ENCODE measurements at regions of chr10 and their contacts with region 1.

Region 1: GRCh38 chr10:4656576-4657182 is 169.3 kb upstream of the AKR1E2 start:
- DNase-seq: peak; percentile 50
- H3K4me3 ChIP-seq: no peak overlapping the region
- H3K27ac ChIP-seq: no peak overlapping the region
- H3K4me1 ChIP-seq: no peaks in the 10 kb centered on the region
- CTCF ChIP-seq: peak; percentile 95

Region 2: GRCh38 chr10:3192856-3193635 is 1463.6 kb before region 1 on chr10:
- CTCF ChIA-PET with region 1: no interaction called
- POLR2A ChIA-PET with region 1: no interaction called
- intact Hi-C with region 1: loop called (anchors 2 kb)
- DNase-seq: peak; percentile 53
- H3K4me3 ChIP-seq: no peak overlapping the region
- H3K27ac ChIP-seq: no peak overlapping the region
- H3K4me1 ChIP-seq: no peaks in the 10 kb centered on the region
- CTCF ChIP-seq: peak; percentile 88

Region 3: DNA sequence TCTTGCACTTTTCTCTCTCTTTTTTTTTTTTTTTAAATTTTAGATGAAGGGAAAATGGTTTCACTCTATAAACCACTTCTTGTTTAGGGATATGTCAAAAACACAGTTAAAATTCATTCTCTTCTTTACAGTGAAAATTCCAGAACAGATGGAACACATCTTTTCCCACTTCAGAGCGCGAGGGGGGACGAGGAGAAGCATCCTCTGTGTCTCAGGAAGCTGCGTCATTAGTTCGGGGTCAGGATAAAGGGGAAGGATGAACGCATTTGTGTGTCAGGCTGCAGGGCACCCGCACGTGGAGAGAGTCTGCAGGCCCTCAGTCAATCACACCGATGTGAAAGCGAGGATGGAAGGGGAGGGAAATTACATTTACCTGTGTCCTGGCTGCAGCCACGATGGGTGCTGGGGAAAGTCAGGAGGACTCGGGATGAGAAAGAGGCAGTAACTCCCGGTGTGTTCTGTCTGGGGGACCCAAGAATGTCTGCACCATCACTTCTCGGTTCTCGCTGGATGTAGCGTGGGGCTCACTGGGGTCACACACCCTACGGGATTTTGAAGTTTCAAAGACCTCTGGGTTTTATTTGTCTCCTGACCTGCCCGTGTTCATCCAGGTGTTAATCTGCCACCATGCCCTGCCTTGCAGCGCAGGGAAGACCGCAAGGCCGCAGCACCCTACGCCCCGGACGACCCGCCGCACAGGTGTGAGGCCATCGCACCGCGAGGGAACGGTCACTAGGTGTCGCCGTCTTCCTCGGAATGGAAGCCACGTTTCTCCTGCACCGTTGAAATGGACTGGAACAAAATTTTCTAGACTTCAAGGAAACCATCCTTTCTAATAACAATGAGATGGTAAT is 1417.4 kb before region 1 on chr10:
- CTCF ChIA-PET with region 1: no interaction called
- POLR2A ChIA-PET with region 1: no interaction called
- intact Hi-C with region 1: loop called (anchors 2 kb)
- DNase-seq: peak; percentile 36
- H3K4me3 ChIP-seq: no peak overlapping the region
- H3K27ac ChIP-seq: no peak overlapping the region
- H3K4me1 ChIP-seq: no peaks in the 10 kb centered on the region
- CTCF ChIP-seq: peak; percentile 79

Measured in OCI-LY7 (cell line).